ENCODE measurements at regions of chr5 and their contacts with region 1.

Region 1: DNA sequence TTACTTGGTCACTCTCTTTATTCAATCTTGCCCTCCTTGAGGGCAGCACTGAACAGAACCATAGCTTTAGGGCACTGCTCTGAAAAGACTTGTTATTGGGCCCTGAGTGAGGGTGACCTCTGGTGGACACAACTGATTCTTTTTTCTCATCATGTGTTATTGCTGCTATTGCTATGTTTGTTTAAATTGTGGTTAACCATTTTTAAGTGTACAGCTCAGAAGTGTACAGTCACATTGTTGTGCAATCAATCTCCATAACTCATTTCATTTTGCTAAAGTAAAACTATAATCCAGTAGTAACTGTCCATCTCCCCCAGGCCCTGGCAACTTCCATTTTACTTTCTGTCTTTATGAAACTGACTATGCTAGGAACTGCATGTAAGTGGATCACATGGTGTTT is 351.1 kb upstream of the RIOK2 start:
- DNase-seq: peak; percentile 11 to 75
- H3K4me3 ChIP-seq: no peak overlapping the region
- H3K27ac ChIP-seq: no peak overlapping the region
- H3K4me1 ChIP-seq: no peaks in the 10 kb centered on the region
- H3K27me3 ChIP-seq: no peaks in the 10 kb centered on the region
- CTCF ChIP-seq: peak; percentile 70

Region 2: GRCh38 chr5:97151370-97151769 is 382.8 kb before region 1 on chr5:
- CTCF ChIA-PET with region 1: no interaction called
- POLR2A ChIA-PET with region 1: no interaction called
- intact Hi-C with region 1: no loop called
- DNase-seq: no peak
- H3K4me3 ChIP-seq: no peak overlapping the region
- H3K27ac ChIP-seq: no peak overlapping the region
- H3K4me1 ChIP-seq: no peaks in the 10 kb centered on the region
- H3K27me3 ChIP-seq: no peaks in the 10 kb centered on the region
- CTCF ChIP-seq: no peak

Region 3: GRCh38 chr5:97231025-97231636 is 303.0 kb before region 1 on chr5:
- CTCF ChIA-PET with region 1: no interaction called
- POLR2A ChIA-PET with region 1: no interaction called
- intact Hi-C with region 1: loop called (anchors 1 kb)
- DNase-seq: peak in 1 of 2 experiments; percentile 62
- H3K4me3 ChIP-seq: no peak overlapping the region
- H3K27ac ChIP-seq: no peak overlapping the region
- H3K4me1 ChIP-seq: peaks cover 21% of the 10 kb centered on the region
- H3K27me3 ChIP-seq: no peaks in the 10 kb centered on the region
- CTCF ChIP-seq: peak; percentile 89

Region 4: GRCh38 chr5:97600486-97600885 is 66.3 kb after region 1 on chr5:
- CTCF ChIA-PET with region 1: no interaction called
- POLR2A ChIA-PET with region 1: no interaction called
- intact Hi-C with region 1: no loop called
- DNase-seq: no peak
- H3K4me3 ChIP-seq: no peak overlapping the region
- H3K27ac ChIP-seq: no peak overlapping the region
- H3K4me1 ChIP-seq: no peaks in the 10 kb centered on the region
- H3K27me3 ChIP-seq: no peaks in the 10 kb centered on the region
- CTCF ChIP-seq: no peak

Measured in PC-9 (cell line).